ENCODE measurements at regions of chr17 and their contacts with region 1.

Region 1: DNA sequence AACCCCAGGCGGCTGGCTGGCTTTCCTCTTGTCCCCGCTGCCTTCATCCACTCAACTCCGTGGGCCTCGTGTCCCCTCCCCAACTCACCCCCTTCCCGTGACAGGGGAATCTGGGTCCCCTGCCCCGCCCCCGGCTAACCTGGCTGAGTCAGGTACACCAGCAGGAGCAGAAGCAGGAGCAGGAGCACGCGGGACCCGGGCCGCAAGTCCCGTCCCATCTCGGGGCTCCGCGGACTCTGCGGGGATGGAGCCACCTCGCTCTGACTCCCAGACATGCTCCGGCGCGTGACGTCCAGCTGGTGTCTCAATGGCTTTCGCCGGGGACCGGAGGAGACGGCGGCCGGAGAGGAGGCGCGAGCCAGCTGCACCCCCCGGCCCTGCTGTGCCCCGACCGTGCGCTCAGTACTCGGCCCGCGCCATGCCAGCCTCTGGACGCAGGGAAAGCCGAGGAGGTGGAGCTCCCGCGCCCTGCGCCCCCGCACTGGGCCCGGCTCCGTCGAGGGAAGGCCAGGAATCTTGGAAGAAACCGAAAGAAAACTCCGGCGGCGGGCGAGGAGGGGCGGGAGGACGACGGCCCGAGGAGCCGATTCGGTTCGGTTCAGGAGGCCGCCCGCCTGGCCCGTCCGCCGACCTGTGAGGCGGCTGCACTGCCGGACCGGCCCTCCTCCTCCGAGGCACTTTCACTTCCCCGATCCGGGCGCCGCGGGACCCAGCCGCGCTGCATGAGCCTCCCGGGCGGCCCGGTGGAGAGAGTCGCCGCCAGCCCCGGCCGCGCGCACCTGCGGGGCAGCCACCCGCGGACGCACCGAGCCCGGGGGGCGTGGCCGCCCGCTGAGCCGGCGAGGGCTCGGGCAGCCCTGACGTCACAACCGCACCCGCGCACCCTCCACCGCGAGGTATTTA is at the starts of genes CXCL16 and ZMYND15:
- DNase-seq: peak; percentile 88
- ATAC-seq: peak; percentile 76
- H3K4me3 ChIP-seq: peak within 1 kb of the TSS; percentile 90
- H3K27ac ChIP-seq: peak within 1 kb of the TSS; percentile 89
- H3K4me1 ChIP-seq: no peaks in the 10 kb centered on the region
- H3K27me3 ChIP-seq: no peaks in the 10 kb centered on the region
- CTCF ChIP-seq: no peak
- total RNA-seq, gene CXCL16: 169 TPM
- total RNA-seq, gene ZMYND15: 9.6 TPM

Region 2: GRCh38 chr17:4789901-4790704 is 50.7 kb after region 1 on chr17:
- intact Hi-C with region 1: loop called (anchors 10 kb)
- DNase-seq: peak; percentile 95
- ATAC-seq: peak; percentile 95
- H3K4me3 ChIP-seq: peak overlapping the region; percentile 85
- H3K27ac ChIP-seq: peak overlapping the region; percentile 90
- H3K4me1 ChIP-seq: peaks cover 44% of the 10 kb centered on the region
- H3K27me3 ChIP-seq: peaks cover 7% of the 10 kb centered on the region
- CTCF ChIP-seq: peak; percentile 68

Measured in upper lobe of right lung (tissue), 1 donor.